Endothelial cell of umbilical vein (primary cell): ENCODE measurements at regions of chr6 and their contacts with region 1.

Region 1: GRCh38 chr6:154500769-154501577 is 9.5 kb downstream of the CNKSR3 start:
- DNase-seq: peak; percentile 67
- H3K4me3 ChIP-seq: no peak overlapping the region
- H3K27ac ChIP-seq: no peak overlapping the region
- H3K4me1 ChIP-seq: peaks cover 19% of the 10 kb centered on the region
- H3K27me3 ChIP-seq: no peaks in the 10 kb centered on the region
- CTCF ChIP-seq: peak; percentile 44 to 47
- POLR2A ChIP-seq: no peak

Region 2: DNA sequence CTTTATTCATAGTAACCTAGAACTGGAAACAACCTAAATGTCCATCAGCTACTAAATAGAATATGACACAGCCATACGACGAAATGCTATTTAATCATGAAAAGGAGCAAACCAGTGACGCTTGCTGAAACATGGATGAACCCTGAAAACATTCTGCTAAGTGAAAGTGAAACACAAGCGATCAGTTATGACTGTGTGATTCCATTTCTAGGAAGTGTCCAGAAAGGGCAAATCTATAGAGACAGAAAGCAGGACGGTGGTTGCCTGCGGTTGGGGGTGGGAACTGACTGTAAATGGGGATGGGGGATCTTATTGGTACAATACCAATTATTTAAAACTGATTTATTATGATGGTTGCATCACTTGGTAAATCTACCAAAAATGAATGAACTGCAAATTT is 271.2 kb before region 1 on chr6:
- CTCF ChIA-PET with region 1: no interaction called
- POLR2A ChIA-PET with region 1: no interaction called
- dilution Hi-C with region 1: no loop called
- intact Hi-C with region 1: no loop called
- DNase-seq: no peak
- H3K4me3 ChIP-seq: no peak overlapping the region
- H3K27ac ChIP-seq: no peak overlapping the region
- H3K4me1 ChIP-seq: no peaks in the 10 kb centered on the region
- H3K27me3 ChIP-seq: no peaks in the 10 kb centered on the region
- CTCF ChIP-seq: no peak
- POLR2A ChIP-seq: no peak

Region 3: DNA sequence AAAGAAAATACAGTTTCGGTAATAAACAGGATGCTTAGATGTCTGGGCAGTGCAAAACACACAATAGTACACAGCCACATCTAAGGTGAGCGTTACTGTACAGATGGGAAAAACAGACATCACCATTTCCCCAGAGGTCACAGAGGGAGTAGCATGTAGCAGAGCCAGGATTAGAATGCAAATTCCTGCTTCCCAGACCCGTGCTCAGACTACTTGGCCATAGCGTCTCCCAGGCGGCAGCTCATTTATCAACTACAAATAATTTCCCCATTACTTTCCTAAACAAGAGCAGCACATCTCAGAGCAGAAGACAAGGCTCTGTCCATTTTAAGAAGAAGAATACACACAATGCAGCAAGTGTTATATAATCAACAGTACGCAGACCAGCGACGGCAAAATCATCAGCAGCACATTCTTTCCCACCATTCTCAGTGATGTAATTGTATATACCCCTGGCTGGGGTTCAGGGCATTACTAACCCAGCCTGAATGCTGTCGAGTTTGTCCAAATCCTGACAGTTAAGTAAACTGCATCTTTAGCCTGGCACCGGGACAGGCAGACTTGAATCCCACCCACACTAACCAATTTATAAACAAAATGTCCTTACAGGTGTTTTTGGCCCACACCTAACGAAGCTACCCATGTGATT is 52.4 kb before region 1 on chr6:
- CTCF ChIA-PET with region 1: interaction called, 11 read pairs
- POLR2A ChIA-PET with region 1: no interaction called
- dilution Hi-C with region 1: no loop called
- intact Hi-C with region 1: loop called (anchors 1 kb)
- DNase-seq: peak; percentile 77
- H3K4me3 ChIP-seq: no peak overlapping the region
- H3K27ac ChIP-seq: no peak overlapping the region
- H3K4me1 ChIP-seq: peaks cover 19% of the 10 kb centered on the region
- H3K27me3 ChIP-seq: no peaks in the 10 kb centered on the region
- CTCF ChIP-seq: peak in 1 of 2 donors; percentile 29
- POLR2A ChIP-seq: no peak

Region 4: GRCh38 chr6:154482858-154483257 is 18.1 kb before region 1 on chr6:
- CTCF ChIA-PET with region 1: interaction called, 14 read pairs
- POLR2A ChIA-PET with region 1: no interaction called
- dilution Hi-C with region 1: no loop called
- intact Hi-C with region 1: no loop called
- DNase-seq: peak; percentile 95
- H3K4me3 ChIP-seq: no peak overlapping the region
- H3K27ac ChIP-seq: peak overlapping the region; percentile 27
- H3K4me1 ChIP-seq: peaks cover 13% of the 10 kb centered on the region
- H3K27me3 ChIP-seq: no peaks in the 10 kb centered on the region
- CTCF ChIP-seq: no peak
- POLR2A ChIP-seq: peak; percentile 67

Region 5: GRCh38 chr6:154515826-154516225 is 14.9 kb after region 1 on chr6:
- CTCF ChIA-PET with region 1: interaction called, 62 read pairs
- POLR2A ChIA-PET with region 1: no interaction called
- dilution Hi-C with region 1: no loop called
- intact Hi-C with region 1: no loop called
- DNase-seq: peak; percentile 85
- H3K4me3 ChIP-seq: peak overlapping the region in 2 of 3 experiments; percentile 8 to 36
- H3K27ac ChIP-seq: peak overlapping the region; percentile 35
- H3K4me1 ChIP-seq: peaks cover 17% of the 10 kb centered on the region
- H3K27me3 ChIP-seq: no peaks in the 10 kb centered on the region
- CTCF ChIP-seq: no peak
- POLR2A ChIP-seq: no peak

Region 6: DNA sequence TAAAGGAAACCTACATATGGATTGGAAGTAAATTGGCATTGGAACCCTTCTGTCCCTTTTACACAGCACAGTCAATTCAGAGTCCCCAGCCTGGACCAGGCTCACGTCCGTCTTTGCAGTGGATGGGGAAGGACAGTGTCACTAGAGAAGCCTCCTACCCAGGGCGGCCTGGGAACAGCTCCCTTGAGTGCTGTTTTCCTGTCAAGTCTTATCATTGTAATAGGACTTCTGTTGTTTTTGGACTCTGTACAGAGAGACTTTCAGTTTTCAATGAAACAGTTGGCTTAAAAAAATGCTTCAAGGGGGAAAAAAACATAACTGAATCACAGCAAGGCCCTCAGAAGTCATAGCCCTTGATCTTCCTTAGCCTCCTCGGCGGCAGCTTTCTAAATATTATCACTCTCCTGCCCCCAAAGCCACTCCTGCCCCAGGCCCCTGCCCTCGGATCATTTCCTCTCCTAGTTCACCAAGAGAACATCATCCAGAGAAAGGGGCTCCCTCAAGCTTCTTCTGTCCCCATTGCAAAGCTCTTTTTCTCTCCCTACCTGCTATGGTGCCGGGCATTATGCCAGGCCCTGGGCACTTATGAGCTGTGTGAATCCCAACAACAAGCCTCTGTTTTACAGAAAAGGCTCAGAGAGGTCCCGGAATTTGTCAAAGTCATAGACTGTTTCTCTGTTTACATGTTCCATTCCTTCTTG is 47.3 kb after region 1 on chr6:
- CTCF ChIA-PET with region 1: interaction called, 15 read pairs
- POLR2A ChIA-PET with region 1: interaction called, 3 read pairs
- dilution Hi-C with region 1: no loop called
- intact Hi-C with region 1: no loop called
- DNase-seq: peak; percentile 92
- H3K4me3 ChIP-seq: no peak overlapping the region
- H3K27ac ChIP-seq: no peak overlapping the region
- H3K4me1 ChIP-seq: peaks cover 8% of the 10 kb centered on the region
- H3K27me3 ChIP-seq: no peaks in the 10 kb centered on the region
- CTCF ChIP-seq: no peak
- POLR2A ChIP-seq: no peak

Region 7: DNA sequence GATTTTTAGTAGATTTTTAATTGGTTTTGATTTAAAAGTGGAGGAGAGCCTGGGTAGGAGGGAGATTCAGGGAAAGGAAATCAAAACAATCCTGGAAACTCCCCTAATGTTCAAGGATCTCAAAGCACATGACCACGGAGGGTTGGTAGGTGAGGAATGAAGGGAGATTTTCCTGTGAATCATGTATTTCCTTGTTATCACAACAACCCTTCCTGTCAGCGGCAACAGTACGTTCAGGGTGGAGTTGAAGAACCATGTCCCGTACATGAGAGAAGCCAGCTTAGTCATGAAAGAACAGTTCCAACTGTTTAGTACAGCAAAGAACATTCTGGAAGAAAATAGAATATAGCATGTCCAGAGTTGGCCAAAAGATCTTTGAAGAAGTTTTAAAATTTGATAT is 152.9 kb after region 1 on chr6:
- CTCF ChIA-PET with region 1: interaction called, 16 read pairs
- POLR2A ChIA-PET with region 1: no interaction called
- dilution Hi-C with region 1: no loop called
- intact Hi-C with region 1: no loop called
- DNase-seq: peak; percentile 95
- H3K4me3 ChIP-seq: no peak overlapping the region
- H3K27ac ChIP-seq: peak overlapping the region; percentile 92
- H3K4me1 ChIP-seq: peaks cover 29% of the 10 kb centered on the region
- H3K27me3 ChIP-seq: no peaks in the 10 kb centered on the region
- CTCF ChIP-seq: no peak
- POLR2A ChIP-seq: no peak

Region 8: GRCh38 chr6:154661768-154662167 is 160.8 kb after region 1 on chr6:
- CTCF ChIA-PET with region 1: interaction called, 19 read pairs
- POLR2A ChIA-PET with region 1: no interaction called
- dilution Hi-C with region 1: no loop called
- intact Hi-C with region 1: no loop called
- DNase-seq: peak; percentile 92
- H3K4me3 ChIP-seq: no peak overlapping the region
- H3K27ac ChIP-seq: peak overlapping the region; percentile 61
- H3K4me1 ChIP-seq: peaks cover 17% of the 10 kb centered on the region
- H3K27me3 ChIP-seq: no peaks in the 10 kb centered on the region
- CTCF ChIP-seq: peak; percentile 31 to 42
- POLR2A ChIP-seq: peak; percentile 29

Region 9: GRCh38 chr6:154754152-154754551 is 253.2 kb after region 1 on chr6:
- CTCF ChIA-PET with region 1: no interaction called
- POLR2A ChIA-PET with region 1: no interaction called
- dilution Hi-C with region 1: no loop called
- intact Hi-C with region 1: no loop called
- DNase-seq: peak; percentile 55
- H3K4me3 ChIP-seq: no peak overlapping the region
- H3K27ac ChIP-seq: no peak overlapping the region
- H3K4me1 ChIP-seq: peaks cover 4% of the 10 kb centered on the region
- H3K27me3 ChIP-seq: no peaks in the 10 kb centered on the region
- CTCF ChIP-seq: no peak
- POLR2A ChIP-seq: no peak

Region 10: DNA sequence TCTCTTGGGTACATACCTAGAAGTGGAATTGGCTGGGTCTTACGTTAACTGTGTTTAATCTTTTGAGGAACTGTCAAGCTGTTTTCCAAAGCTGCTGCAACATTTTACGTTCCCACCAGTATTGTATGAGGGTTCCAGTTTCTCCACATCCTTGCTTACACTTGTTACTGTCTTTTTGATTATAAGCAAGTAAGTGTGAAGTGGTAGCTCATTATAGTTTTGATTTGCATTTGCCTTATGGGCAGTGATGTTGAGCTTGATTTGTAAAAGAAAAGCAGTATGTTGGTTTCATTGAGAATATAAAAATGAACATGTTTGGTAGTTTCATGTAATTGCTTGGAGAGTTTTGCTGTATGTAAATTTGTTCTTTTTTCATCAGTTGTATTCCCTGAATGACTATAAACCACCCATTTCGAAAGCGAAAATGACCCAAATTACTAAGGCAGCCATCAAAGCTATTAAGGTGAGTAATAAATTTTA is 272.7 kb after region 1 on chr6:
- CTCF ChIA-PET with region 1: no interaction called
- POLR2A ChIA-PET with region 1: no interaction called
- dilution Hi-C with region 1: no loop called
- intact Hi-C with region 1: no loop called
- DNase-seq: no peak
- H3K4me3 ChIP-seq: no peak overlapping the region
- H3K27ac ChIP-seq: no peak overlapping the region
- H3K4me1 ChIP-seq: no peaks in the 10 kb centered on the region
- H3K27me3 ChIP-seq: no peaks in the 10 kb centered on the region
- CTCF ChIP-seq: no peak
- POLR2A ChIP-seq: no peak

Region 11: GRCh38 chr6:155985660-155986138 is 1484.7 kb after region 1 on chr6:
- CTCF ChIA-PET with region 1: no interaction called
- POLR2A ChIA-PET with region 1: no interaction called
- dilution Hi-C with region 1: no loop called
- intact Hi-C with region 1: no loop called
- DNase-seq: peak; percentile 8
- H3K4me3 ChIP-seq: no peak overlapping the region
- H3K27ac ChIP-seq: no peak overlapping the region
- H3K4me1 ChIP-seq: no peaks in the 10 kb centered on the region
- H3K27me3 ChIP-seq: peaks cover 0 to 2% of the 10 kb centered on the region in 2 experiments
- CTCF ChIP-seq: no peak
- POLR2A ChIP-seq: no peak